ENCODE measurements at regions of chr5 and their contacts with region 1.

Region 1: DNA sequence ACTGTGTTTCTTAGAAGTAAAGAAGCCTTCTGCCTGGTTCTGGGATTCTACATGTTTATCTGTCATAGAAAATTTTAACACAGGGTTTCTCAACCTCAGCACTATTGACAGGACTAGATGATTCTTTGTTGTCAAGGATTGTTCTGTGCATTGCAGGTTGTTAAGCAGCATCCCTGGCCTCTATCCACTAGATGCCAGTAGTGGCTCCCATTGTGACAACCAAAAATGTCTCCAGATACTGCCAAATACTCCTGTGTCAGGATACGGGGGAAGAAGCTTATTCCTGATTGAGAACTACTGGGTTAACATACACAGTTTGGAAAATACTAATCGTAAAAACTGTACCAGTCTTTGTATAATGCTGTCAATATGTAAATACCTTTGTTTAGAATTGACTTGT is 167.1 kb downstream of the NIPBL start:
- DNase-seq: no peak

Region 2: GRCh38 chr5:36040651-36041537 is 1002.8 kb before region 1 on chr5:
- in situ Hi-C with region 1: no loop called
- DNase-seq: no peak

Region 3: DNA sequence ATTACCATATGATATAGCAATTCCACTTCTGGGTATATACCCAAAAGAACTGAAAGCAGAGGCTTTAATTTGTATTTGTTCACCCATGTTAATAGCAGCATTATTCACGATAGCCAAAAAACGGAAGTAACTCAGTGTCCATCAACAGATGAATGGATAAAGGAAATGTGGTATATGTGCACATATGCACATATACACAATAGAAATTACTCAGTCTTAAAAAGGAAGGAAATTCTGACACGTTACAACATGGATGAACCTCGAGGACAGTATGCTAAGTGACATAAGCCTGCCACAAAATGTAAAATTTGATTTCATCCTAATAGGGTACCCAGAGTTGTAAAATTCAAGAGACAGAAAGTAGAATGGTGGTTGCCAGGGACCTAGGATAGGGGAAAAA is 272.3 kb after region 1 on chr5:
- in situ Hi-C with region 1: no loop called
- DNase-seq: no peak

Region 4: GRCh38 chr5:37326536-37326935 is 282.8 kb after region 1 on chr5:
- in situ Hi-C with region 1: loop called (anchors 25 kb)
- DNase-seq: no peak

Region 5: DNA sequence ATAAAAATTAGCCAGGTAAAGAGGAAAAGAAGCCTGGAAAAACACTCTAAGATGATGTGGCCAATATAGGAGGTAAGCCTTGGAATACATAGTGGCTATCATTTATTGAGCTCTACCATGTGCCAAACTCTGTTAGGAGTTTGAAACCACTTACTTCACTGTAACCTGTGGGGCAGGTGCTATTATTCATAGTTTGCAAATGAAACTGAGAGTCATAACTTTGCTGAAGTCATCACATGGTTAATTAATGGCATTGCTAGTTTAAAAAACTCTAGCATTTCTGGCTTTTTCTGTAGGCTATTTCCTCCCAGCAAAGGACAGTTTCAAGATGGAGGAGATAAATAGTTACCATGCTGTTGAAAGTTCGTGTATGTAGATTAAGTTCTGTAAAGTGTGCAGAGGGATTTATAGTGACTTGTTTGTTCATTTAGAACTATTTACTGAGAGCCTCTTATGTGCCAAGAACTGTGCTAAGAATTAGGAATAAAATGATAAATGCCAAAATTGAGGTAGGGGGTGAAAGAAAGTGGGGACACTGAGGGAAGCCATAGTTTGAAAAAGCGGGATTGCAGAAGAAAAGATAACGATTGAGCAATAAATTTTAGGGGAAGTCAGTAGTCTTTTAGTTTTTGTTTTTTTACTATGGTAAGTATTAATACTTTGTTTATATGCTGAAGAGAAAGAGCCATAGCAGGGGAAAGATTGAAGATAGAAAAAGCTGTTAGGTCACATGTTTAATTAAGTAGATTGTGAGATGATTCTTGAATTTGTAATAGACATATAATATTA is 392.7 kb after region 1 on chr5:
- in situ Hi-C with region 1: no loop called
- DNase-seq: no peak

Measured in KBM-7 (cell line).